ENCODE measurements at regions of chr4 and their contacts with region 1.

Region 1: DNA sequence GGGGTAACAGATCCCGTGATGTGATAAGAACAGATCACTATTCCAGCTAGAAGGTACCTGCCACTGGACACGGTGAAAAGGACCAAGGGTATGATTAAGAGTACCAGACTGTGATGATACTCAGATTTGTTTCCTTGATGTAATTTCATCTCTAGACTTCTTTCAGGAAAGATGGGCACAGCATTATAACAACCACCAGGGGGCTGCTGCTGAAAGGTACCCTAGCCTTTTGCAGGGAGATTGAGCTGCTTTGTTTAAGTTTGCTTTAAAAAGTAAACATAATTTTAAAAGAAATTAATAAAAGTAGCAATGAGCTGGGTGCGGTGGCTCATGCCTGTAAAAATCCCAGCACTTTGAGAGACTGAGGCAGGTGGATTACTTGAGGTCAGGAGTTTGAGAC is 145.4 kb downstream of the EMCN start:
- DNase-seq: peak in 1 of 2 experiments; percentile 44
- H3K4me3 ChIP-seq: no peak overlapping the region
- H3K27ac ChIP-seq: no peak overlapping the region
- H3K4me1 ChIP-seq: no peaks in the 10 kb centered on the region
- H3K27me3 ChIP-seq: no peaks in the 10 kb centered on the region
- CTCF ChIP-seq: peak in 2 of 3 experiments; percentile 39 to 57; a peak in 2 of 4 replicates
- EP300 ChIP-seq: no peak
- POLR2A ChIP-seq: no peak
- RAD21 ChIP-seq: peak; percentile 32 to 43; a peak in 3 of 4 replicates

Region 2: GRCh38 chr4:100162027-100162685 is 210.3 kb before region 1 on chr4:
- CTCF ChIA-PET with region 1: no interaction called
- POLR2A ChIA-PET with region 1: no interaction called
- DNase-seq: no peak
- H3K4me3 ChIP-seq: no peak overlapping the region
- H3K27ac ChIP-seq: no peak overlapping the region
- H3K4me1 ChIP-seq: no peaks in the 10 kb centered on the region; a peak in 1 of 7 replicates
- H3K27me3 ChIP-seq: no peaks in the 10 kb centered on the region
- CTCF ChIP-seq: no peak
- EP300 ChIP-seq: no peak
- POLR2A ChIP-seq: no peak
- RAD21 ChIP-seq: no peak

Region 3: GRCh38 chr4:100362366-100362765 is 10.1 kb before region 1 on chr4:
- CTCF ChIA-PET with region 1: interaction called, 17 read pairs
- POLR2A ChIA-PET with region 1: no interaction called
- DNase-seq: no peak
- H3K4me3 ChIP-seq: no peak overlapping the region
- H3K27ac ChIP-seq: no peak overlapping the region
- H3K4me1 ChIP-seq: no peaks in the 10 kb centered on the region
- H3K27me3 ChIP-seq: no peaks in the 10 kb centered on the region
- CTCF ChIP-seq: no peak
- EP300 ChIP-seq: no peak
- POLR2A ChIP-seq: no peak
- RAD21 ChIP-seq: no peak

Measured in H1 (cell line).